Testis (tissue), 5 donors: ENCODE measurements at regions of chr1 and their contacts with region 1.

Region 1: GRCh38 chr1:30779294-30780071 is 21.9 kb upstream of the LAPTM5 start:
- DNase-seq: peak; percentile 91
- H3K4me3 ChIP-seq: no peak overlapping the region
- H3K27ac ChIP-seq: no peak overlapping the region
- H3K4me1 ChIP-seq: peaks cover 13% of the 10 kb centered on the region
- H3K27me3 ChIP-seq: no peaks in the 10 kb centered on the region
- CTCF ChIP-seq: peak; percentile 99 to 100 (median 99)
- POLR2A ChIP-seq: no peak

Region 2: GRCh38 chr1:30719406-30720270 is 59.8 kb before region 1 on chr1:
- intact Hi-C with region 1: loop called (anchors 5 kb)
- DNase-seq: no peak
- H3K4me3 ChIP-seq: peak overlapping the region; percentile 60 to 66
- H3K27ac ChIP-seq: peak overlapping the region; percentile 98
- H3K4me1 ChIP-seq: peaks cover 9% of the 10 kb centered on the region
- H3K27me3 ChIP-seq: no peaks in the 10 kb centered on the region
- CTCF ChIP-seq: peak in 1 of 3 experiments; percentile 3
- POLR2A ChIP-seq: no peak

Region 3: GRCh38 chr1:30903343-30904034 is 124.0 kb after region 1 on chr1:
- intact Hi-C with region 1: no loop called
- DNase-seq: no peak
- H3K4me3 ChIP-seq: no peak overlapping the region
- H3K27ac ChIP-seq: no peak overlapping the region
- H3K4me1 ChIP-seq: no peaks in the 10 kb centered on the region
- H3K27me3 ChIP-seq: no peaks in the 10 kb centered on the region
- CTCF ChIP-seq: no peak
- POLR2A ChIP-seq: no peak